K562 (cell line): ENCODE measurements at regions of chr1 and their contacts with region 1.

Region 1: GRCh38 chr1:150548632-150549495 is at the start of gene ADAMTSL4:
- DNase-seq: peak; percentile 84 to 94 (median 90)
- ATAC-seq: peak; percentile 54
- H3K4me3 ChIP-seq: peak within 1 kb of the TSS; percentile 75
- H3K27ac ChIP-seq: peak within 1 kb of the TSS; percentile 87
- H3K4me1 ChIP-seq: peaks cover 53 to 84% of the 10 kb centered on the region in 2 experiments
- H3K27me3 ChIP-seq: no peaks in the 10 kb centered on the region
- CTCF ChIP-seq: peak in 2 of 3 experiments; percentile 3; a peak in 2 of 6 replicates
- EP300 ChIP-seq: no peak
- POLR2A ChIP-seq: peak; percentile 70
- RAD21 ChIP-seq: peak in 1 of 2 experiments; percentile 9; a peak in 1 of 4 replicates
- polyA plus RNA-seq, gene ADAMTSL4: 12.7 to 14.8 TPM

Region 2: DNA sequence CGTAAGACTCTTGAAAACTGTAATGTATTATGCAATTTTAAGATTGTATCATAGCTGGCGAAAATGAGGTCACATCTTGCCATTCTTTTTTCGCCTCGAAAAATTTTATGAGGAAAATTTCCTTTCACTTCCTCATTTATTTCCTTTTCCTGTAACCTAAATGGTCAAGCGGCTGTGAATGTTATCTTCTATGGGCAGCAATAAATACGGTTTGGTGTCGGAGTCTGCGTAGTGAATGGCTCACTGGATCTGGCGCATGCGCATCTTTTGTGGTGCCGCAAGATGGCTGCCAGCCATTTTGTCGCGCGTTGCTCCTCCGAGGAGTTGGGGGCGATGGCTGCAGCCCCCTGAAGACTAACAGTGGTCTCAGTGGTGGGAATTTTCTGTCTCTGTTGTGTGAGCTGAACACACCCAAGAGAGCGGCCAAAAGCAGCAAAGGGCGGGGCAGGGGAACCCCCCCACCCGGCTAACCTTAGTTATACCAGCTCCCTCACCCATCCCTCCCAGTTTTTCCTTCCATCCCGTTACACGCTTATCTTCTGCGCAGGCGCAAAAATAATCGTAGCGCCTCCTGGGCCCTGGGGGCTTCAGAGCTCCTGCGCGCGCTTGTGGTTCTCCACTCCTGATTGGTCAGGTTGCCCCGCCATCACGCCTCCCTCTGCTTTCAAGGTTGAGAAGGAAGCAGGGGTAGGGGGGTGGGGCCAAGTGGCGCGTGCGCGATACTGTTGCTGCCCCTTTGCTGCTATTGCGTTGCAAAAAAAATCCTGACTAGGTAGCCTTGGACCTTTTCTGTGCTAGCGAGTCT is 185.2 kb before region 1 on chr1 and contains the start of gene RPRD2:
- CTCF ChIA-PET with region 1: no interaction called
- POLR2A ChIA-PET with region 1: no interaction called
- in situ Hi-C with region 1: no loop called
- intact Hi-C with region 1: loop called (anchors 10 kb)
- DNase-seq: peak; percentile 98 to 100 (median 99)
- ATAC-seq: peak; percentile 93
- H3K4me3 ChIP-seq: peak within 1 kb of the TSS; percentile 69
- H3K27ac ChIP-seq: peak within 1 kb of the TSS; percentile 99
- H3K4me1 ChIP-seq: peaks cover 8 to 13% of the 10 kb centered on the region in 2 experiments
- H3K27me3 ChIP-seq: no peaks in the 10 kb centered on the region
- CTCF ChIP-seq: peak in 1 of 3 experiments; percentile 9; a peak in 1 of 6 replicates
- EP300 ChIP-seq: peak; percentile 59; the same call in 1 of the 2 replicates
- POLR2A ChIP-seq: peak; percentile 96
- RAD21 ChIP-seq: no peak
- polyA plus RNA-seq, gene RPRD2: 1.5 to 4.4 TPM

Region 3: GRCh38 chr1:150532868-150533302 is 16.0 kb before region 1 on chr1:
- CTCF ChIA-PET with region 1: no interaction called
- POLR2A ChIA-PET with region 1: interaction called, 53 read pairs
- in situ Hi-C with region 1: no loop called
- intact Hi-C with region 1: loop called (anchors 2 kb)
- DNase-seq: no peak
- ATAC-seq: no peak
- H3K4me3 ChIP-seq: no peak overlapping the region
- H3K27ac ChIP-seq: 0 out of 3 replicates have a peak overlapping the region, but pooled peaks have one; percentile 13
- H3K4me1 ChIP-seq: peaks cover 9 to 19% of the 10 kb centered on the region in 2 experiments; a peak in 4 of 5 replicates
- H3K27me3 ChIP-seq: no peaks in the 10 kb centered on the region
- CTCF ChIP-seq: no peak; a peak in 1 of 6 replicates
- EP300 ChIP-seq: no peak
- POLR2A ChIP-seq: no peak
- RAD21 ChIP-seq: no peak

Region 4: DNA sequence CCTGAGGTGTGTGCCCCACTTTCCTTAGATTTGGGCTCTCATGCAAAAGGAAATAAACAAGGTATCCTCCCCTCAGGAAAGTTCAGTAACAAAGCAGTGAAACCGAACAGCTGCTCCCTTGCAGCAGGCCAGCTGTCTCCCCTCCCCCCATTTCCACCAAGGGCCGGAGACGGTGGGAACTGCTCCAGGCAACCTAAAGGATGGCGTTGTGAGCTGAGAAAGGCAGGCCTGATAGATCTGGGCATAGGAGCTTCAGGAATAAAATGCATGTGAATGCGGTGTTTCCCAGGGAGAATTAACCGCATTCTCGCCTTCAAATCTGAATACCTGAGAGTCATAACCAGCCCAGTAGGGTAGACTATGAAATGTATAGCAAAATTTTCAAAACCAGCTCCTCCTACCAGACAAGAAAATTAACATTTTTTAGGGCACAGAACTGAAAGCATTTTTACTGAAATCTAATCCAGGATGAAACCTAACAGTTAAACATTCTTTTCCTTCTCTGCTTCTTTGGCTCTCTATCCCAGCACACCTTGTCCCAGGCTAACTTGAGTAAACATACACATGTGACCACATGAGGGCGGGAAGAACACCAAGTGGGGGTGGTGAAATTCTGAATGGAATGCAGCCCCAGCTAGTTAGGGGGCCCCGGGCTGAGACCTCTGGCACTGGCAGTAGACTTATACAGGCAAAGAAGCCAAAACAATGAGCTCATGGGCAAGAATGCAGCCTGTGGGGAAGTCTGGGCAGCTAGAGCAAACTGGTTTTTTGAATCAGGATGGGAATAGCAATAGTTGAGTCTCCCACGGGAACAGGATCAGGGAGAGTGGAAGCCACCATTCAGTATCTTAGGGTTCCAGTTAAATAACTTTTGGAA is 19.1 kb after region 1 on chr1:
- CTCF ChIA-PET with region 1: interaction called, 4 read pairs
- POLR2A ChIA-PET with region 1: interaction called, 13 read pairs
- in situ Hi-C with region 1: no loop called
- intact Hi-C with region 1: no loop called
- DNase-seq: peak; percentile 48 to 71 (median 58)
- ATAC-seq: peak; percentile 47
- H3K4me3 ChIP-seq: no peak overlapping the region
- H3K27ac ChIP-seq: peak overlapping the region; percentile 51
- H3K4me1 ChIP-seq: peaks cover 22 to 34% of the 10 kb centered on the region in 2 experiments
- H3K27me3 ChIP-seq: no peaks in the 10 kb centered on the region
- CTCF ChIP-seq: peak in 2 of 3 experiments; percentile 14 to 31; a peak in 2 of 6 replicates
- EP300 ChIP-seq: no peak
- POLR2A ChIP-seq: peak; percentile 35
- RAD21 ChIP-seq: no peak

Region 5: DNA sequence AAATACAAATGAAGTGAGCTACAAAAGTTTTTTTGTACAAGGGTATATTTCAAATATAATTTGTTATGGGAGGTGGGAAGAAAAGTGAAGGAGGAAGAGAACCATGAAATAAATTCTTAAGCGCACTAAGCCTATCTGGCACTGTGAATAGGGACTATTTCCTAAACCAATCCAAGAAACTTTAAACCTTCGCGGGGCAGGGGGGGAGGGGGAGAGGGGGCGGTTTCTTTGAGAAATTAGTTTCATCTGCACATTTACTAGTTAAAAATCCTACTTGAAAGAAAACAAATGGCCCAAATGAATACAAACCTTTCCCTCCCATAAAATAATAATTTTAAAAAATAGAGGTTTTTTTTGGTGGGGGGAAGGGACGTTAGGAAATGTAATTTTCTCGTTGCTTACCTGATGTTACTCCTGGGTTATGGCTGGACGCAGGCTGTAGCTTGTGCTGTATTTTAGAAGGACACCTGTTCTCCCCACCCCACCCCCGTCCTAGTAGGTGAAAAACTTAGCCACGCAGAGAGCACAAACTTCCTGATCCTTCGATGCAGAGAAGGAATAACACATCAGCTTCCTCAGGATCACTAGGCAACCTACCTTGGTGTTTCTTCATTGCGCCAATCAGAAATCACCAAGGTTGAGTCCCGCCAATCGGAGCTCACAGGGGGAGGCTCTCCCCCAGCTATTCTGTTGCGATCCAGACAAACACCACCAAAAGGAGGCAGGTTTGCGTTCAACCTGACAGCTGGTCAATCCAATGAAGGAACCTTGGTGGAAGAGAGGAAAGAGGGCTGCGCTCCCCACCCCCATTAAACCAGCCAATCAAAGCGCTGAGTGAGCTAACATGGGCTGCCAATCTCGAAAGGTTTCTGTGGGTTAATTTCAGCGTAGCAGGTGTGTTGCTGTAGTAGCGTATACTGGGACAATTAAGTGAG is 148.0 kb after region 1 on chr1 and contains the start of gene GOLPH3L:
- CTCF ChIA-PET with region 1: no interaction called
- POLR2A ChIA-PET with region 1: no interaction called
- in situ Hi-C with region 1: no loop called
- intact Hi-C with region 1: no loop called
- DNase-seq: peak; percentile 95 to 99 (median 97)
- ATAC-seq: peak; percentile 99
- H3K4me3 ChIP-seq: peak within 1 kb of the TSS; percentile 55
- H3K27ac ChIP-seq: peak within 1 kb of the TSS; percentile 65
- H3K4me1 ChIP-seq: no peaks in the 10 kb centered on the region; a peak in 1 of 5 replicates
- H3K27me3 ChIP-seq: no peaks in the 10 kb centered on the region
- CTCF ChIP-seq: peak in 1 of 3 experiments; percentile 1; a peak in 1 of 6 replicates
- EP300 ChIP-seq: no peak
- POLR2A ChIP-seq: peak; percentile 76
- RAD21 ChIP-seq: no peak
- polyA plus RNA-seq, gene GOLPH3L: 16.8 to 21.9 TPM